ENCODE measurements at regions of chr3 and their contacts with region 1.

Region 1: DNA sequence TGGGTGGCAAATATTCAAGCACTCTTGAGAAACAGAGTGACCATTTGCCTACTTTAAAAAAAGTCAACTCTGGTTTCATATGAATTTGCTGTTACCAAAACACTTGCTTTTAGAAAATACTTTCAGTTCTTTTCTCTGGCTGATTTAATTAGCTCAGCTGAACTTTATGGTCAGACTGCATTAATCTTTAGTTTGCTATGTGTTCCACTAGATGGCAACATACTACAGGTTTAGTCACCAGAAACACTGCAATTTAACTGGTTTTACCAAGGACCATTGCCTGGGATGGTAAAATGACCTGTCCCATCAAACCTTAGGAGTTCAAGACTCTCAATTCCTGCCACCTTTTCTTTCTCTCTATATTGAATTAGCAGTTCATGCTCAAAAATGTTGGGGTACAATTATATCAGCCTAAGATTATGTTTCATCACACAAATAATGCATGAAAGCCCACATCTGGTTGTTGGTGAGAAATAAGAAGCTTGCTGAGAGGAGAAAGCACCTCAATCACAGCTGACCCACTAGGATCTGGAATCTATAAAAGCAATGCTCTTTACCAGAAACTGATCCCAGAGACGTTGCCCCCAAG is 14.2 kb downstream of the EIF4E3 start:
- DNase-seq: no peak
- ATAC-seq: peak; percentile 84
- H3K4me3 Mint-ChIP-seq: no peak overlapping the region
- H3K27ac Mint-ChIP-seq: no peak overlapping the region
- H3K4me1 Mint-ChIP-seq: peaks cover 3% of the 10 kb centered on the region; the same call in 1 of the 2 replicates
- H3K27me3 Mint-ChIP-seq: no peaks in the 10 kb centered on the region; the same call in 1 of the 2 replicates
- CTCF ChIP-seq: peak; percentile 42

Region 2: DNA sequence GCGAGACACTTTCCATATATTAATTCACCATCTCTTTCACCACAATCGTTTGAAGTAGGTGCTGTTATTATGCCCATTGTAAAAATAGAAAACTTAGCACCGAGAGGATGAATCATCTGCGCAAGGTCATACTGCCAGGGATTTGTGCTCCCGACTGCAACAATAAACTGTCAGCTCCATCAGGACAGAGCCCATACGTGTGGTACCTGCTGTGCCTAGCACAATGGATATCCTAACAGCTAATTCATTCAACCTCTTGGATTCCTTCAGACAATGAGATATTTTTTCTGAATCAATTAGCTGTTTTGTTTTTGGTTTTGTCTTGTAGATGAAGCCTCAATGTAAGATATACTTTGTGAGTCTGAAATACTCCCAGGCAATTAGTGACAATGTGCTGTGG is 106.3 kb after region 1 on chr3:
- CTCF ChIA-PET with region 1: no interaction called
- POLR2A ChIA-PET with region 1: no interaction called
- DNase-seq: no peak
- ATAC-seq: peak; percentile 88
- H3K4me3 Mint-ChIP-seq: no peak overlapping the region
- H3K27ac Mint-ChIP-seq: no peak overlapping the region
- H3K4me1 Mint-ChIP-seq: peaks cover 23% of the 10 kb centered on the region
- H3K27me3 Mint-ChIP-seq: peaks cover 96% of the 10 kb centered on the region
- CTCF ChIP-seq: no peak

Region 3: DNA sequence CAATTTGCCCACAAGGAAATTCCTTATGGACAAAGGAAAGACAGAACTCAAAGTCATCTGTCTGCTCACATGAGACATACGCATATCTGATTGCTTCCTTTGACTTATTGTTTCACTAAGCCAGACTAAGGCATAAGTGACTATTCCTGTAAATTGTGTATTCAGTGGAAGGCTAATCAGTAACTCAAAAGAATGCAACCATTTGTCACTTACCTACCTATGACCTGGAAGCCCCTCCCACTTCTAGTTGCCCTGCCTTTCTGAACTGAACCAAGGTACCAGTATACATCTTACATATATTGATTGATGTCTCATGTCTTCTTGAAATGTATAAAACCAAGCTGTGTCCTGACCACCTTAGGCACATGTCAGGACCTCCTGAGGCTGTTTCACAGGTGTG is 127.4 kb after region 1 on chr3:
- CTCF ChIA-PET with region 1: no interaction called
- POLR2A ChIA-PET with region 1: no interaction called
- DNase-seq: no peak
- ATAC-seq: peak; percentile 48
- H3K4me3 Mint-ChIP-seq: no peak overlapping the region
- H3K27ac Mint-ChIP-seq: 0 out of 2 replicates have a peak overlapping the region, but pooled peaks have one; percentile 61
- H3K4me1 Mint-ChIP-seq: peaks cover 28% of the 10 kb centered on the region
- H3K27me3 Mint-ChIP-seq: no peaks in the 10 kb centered on the region; the same call in 1 of the 2 replicates
- CTCF ChIP-seq: no peak

Region 4: GRCh38 chr3:71859123-71859519 is 148.1 kb after region 1 on chr3:
- CTCF ChIA-PET with region 1: interaction called, 31 read pairs
- POLR2A ChIA-PET with region 1: no interaction called
- DNase-seq: no peak
- ATAC-seq: peak; percentile 74
- H3K4me3 Mint-ChIP-seq: no peak overlapping the region
- H3K27ac Mint-ChIP-seq: no peak overlapping the region
- H3K4me1 Mint-ChIP-seq: peaks cover 30% of the 10 kb centered on the region
- H3K27me3 Mint-ChIP-seq: no peaks in the 10 kb centered on the region; the same call in 1 of the 2 replicates
- CTCF ChIP-seq: peak; percentile 40; the same call in 1 of the 2 replicates

Measured in WTC11 (cell line).